Adrenal gland (tissue), 19 donors: ENCODE measurements at regions of chr1 and their contacts with region 1.

Region 1: DNA sequence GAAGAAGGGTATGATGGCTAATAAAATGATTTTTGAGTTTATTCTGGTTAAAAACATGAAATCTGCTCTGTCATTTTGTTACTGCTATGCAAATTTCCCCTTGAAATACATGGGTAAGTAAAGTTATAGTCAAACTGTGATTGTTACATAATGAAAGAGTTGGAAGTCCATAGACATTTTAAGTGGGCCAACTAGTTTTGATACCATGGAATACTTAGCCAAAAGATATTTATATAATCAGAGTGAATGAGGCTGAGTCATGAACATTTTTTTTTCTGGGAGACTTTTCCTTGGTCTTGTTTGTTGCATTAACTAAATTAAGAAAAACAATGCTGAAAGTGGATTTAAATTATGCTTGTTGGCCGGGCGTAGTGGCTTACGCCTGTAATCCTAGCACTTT is 58.2 kb upstream of the MPC2 start:
- DNase-seq: no peak
- H3K4me3 ChIP-seq: no peak overlapping the region
- H3K27ac ChIP-seq: peak overlapping the region in 1 of 5 donors; percentile 16
- H3K4me1 ChIP-seq: peaks cover 12 to 13% of the 10 kb centered on the region in 2 donors
- H3K27me3 ChIP-seq: no peaks in the 10 kb centered on the region
- CTCF ChIP-seq: no peak
- POLR2A ChIP-seq: no peak

Region 2: DNA sequence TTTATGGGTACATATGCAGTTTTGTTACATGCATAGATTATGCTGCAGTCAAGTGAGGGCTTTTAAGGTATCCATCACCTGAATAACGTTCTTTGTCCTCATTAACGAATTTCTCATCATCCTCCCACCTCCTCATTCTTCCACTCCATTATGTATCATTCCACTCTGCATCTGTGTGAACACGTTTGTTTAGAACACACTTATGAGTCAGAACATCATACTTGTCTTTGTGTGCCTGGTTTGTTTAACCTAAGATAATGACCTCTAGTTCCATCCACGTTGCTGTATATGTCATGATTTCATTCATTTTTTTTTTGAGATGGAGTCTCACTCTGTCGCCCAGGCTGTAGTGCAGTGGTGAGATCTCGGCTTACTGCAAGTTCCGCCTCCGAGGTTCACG is 51.5 kb before region 1 on chr1:
- intact Hi-C with region 1: loop called in 1 of 2 experiments (anchors 10 kb)
- DNase-seq: no peak
- H3K4me3 ChIP-seq: no peak overlapping the region
- H3K27ac ChIP-seq: no peak overlapping the region
- H3K4me1 ChIP-seq: peaks cover 18 to 27% of the 10 kb centered on the region in 2 donors
- H3K27me3 ChIP-seq: no peaks in the 10 kb centered on the region
- CTCF ChIP-seq: no peak
- POLR2A ChIP-seq: no peak

Region 3: GRCh38 chr1:168991667-168992475 is 996.8 kb after region 1 on chr1:
- intact Hi-C with region 1: no loop called
- DNase-seq: no peak
- H3K4me3 ChIP-seq: no peak overlapping the region
- H3K27ac ChIP-seq: no peak overlapping the region
- H3K4me1 ChIP-seq: no peaks in the 10 kb centered on the region
- H3K27me3 ChIP-seq: no peaks in the 10 kb centered on the region
- CTCF ChIP-seq: no peak
- POLR2A ChIP-seq: no peak